ENCODE measurements at regions of chr5 and their contacts with region 1.

Region 1: GRCh38 chr5:109161914-109162683 is 247.7 kb downstream of the PJA2 start:
- DNase-seq: no peak
- ATAC-seq: no peak
- H3K4me3 Mint-ChIP-seq: no peak overlapping the region
- H3K27ac Mint-ChIP-seq: peak overlapping the region; percentile 51
- H3K4me1 Mint-ChIP-seq: peaks cover 31% of the 10 kb centered on the region
- H3K27me3 Mint-ChIP-seq: no peaks in the 10 kb centered on the region
- CTCF ChIP-seq: no peak

Region 2: GRCh38 chr5:108942701-108943100 is 219.4 kb before region 1 on chr5:
- CTCF ChIA-PET with region 1: no interaction called
- POLR2A ChIA-PET with region 1: no interaction called
- intact Hi-C with region 1: no loop called
- DNase-seq: no peak
- ATAC-seq: no peak
- H3K4me3 Mint-ChIP-seq: no peak overlapping the region
- H3K27ac Mint-ChIP-seq: no peak overlapping the region
- H3K4me1 Mint-ChIP-seq: no peaks in the 10 kb centered on the region
- H3K27me3 Mint-ChIP-seq: no peaks in the 10 kb centered on the region
- CTCF ChIP-seq: no peak

Region 3: DNA sequence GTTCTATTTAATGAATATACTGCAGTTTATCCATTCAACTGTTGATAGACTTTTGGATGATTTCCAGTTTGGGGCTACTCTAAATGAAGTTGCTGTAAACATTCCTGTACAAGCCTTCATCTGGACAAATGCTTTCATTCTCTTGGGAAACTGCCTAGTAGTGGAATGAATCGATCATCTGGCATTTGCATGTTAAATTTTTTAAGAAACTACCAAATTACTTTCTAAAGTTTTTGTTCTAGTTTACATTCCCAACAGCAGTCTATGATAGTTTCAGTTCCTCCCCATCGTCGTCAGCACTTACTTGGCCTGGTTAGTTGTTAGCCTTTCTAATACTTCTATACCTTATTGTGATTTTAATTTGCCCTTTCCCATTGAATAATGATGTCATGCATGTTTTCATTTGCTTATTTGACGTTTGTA is 108.1 kb before region 1 on chr5:
- CTCF ChIA-PET with region 1: no interaction called
- POLR2A ChIA-PET with region 1: no interaction called
- intact Hi-C with region 1: loop called (anchors 5 kb)
- DNase-seq: no peak
- ATAC-seq: peak; percentile 65
- H3K4me3 Mint-ChIP-seq: peak overlapping the region; percentile 12
- H3K27ac Mint-ChIP-seq: peak overlapping the region; percentile 24
- H3K4me1 Mint-ChIP-seq: peaks cover 9% of the 10 kb centered on the region
- H3K27me3 Mint-ChIP-seq: no peaks in the 10 kb centered on the region
- CTCF ChIP-seq: no peak

Region 4: DNA sequence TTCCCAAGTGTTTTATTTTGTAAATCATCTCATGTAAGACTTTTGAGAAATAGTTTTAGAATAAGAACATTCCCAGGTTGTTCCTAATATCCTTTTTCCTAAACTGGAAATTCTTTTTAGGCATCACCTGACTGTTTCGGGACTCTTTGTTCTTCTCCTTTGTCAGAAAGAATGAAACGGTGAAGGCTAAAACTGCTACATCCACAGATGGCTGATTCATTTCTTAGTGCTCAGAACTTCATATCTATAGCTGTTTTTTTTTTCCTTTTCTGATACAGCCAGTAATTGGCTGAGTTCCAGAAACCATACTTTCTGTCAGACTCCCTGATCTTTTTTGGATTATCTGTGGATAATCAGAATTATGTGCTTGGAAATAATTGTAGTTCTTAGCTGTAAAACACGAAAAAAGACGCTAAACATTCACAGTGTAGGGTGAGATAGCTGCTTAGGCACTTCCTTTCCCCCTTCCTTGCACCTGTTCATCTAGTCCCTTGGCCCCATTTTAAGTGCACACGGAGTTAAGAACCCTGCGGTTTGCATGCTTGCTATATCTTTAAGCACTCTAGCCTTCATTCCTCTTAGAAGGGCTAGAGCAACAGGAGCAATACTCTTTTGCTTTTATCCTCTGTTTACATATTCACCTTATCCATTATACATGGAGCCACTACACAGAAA is 36.2 kb before region 1 on chr5:
- CTCF ChIA-PET with region 1: no interaction called
- POLR2A ChIA-PET with region 1: no interaction called
- intact Hi-C with region 1: no loop called
- DNase-seq: no peak
- ATAC-seq: no peak
- H3K4me3 Mint-ChIP-seq: no peak overlapping the region
- H3K27ac Mint-ChIP-seq: no peak overlapping the region
- H3K4me1 Mint-ChIP-seq: no peaks in the 10 kb centered on the region
- H3K27me3 Mint-ChIP-seq: no peaks in the 10 kb centered on the region
- CTCF ChIP-seq: no peak

Region 5: DNA sequence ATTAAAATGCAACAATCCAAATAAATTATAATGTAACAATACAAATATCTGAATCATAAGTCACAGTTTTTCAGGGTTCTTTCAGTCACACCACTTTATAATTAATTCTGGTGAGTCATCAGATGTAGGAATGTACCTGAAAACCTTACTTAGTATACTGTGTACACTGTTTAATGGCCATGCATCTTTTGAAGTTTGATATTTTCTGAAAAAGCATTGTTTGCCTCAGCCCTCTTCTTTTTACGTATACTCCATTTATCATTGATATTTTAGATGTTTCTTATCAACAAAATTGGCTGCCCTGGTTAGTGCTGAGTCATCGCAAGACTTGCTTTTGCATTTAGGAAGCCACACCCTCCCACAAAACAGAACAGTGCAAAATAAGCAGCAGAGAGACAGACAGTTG is 29.1 kb after region 1 on chr5:
- CTCF ChIA-PET with region 1: no interaction called
- POLR2A ChIA-PET with region 1: no interaction called
- intact Hi-C with region 1: loop called (anchors 1 kb)
- DNase-seq: no peak
- ATAC-seq: no peak
- H3K4me3 Mint-ChIP-seq: no peak overlapping the region
- H3K27ac Mint-ChIP-seq: no peak overlapping the region
- H3K4me1 Mint-ChIP-seq: peaks cover 6% of the 10 kb centered on the region
- H3K27me3 Mint-ChIP-seq: no peaks in the 10 kb centered on the region
- CTCF ChIP-seq: no peak

Measured in activated B cell treated with CpG ODN at 0.5 μM for 24 hours (primary cell).